Mammary epithelial cell (primary cell): ENCODE measurements at regions of chr2 and their contacts with region 1.

Region 1: DNA sequence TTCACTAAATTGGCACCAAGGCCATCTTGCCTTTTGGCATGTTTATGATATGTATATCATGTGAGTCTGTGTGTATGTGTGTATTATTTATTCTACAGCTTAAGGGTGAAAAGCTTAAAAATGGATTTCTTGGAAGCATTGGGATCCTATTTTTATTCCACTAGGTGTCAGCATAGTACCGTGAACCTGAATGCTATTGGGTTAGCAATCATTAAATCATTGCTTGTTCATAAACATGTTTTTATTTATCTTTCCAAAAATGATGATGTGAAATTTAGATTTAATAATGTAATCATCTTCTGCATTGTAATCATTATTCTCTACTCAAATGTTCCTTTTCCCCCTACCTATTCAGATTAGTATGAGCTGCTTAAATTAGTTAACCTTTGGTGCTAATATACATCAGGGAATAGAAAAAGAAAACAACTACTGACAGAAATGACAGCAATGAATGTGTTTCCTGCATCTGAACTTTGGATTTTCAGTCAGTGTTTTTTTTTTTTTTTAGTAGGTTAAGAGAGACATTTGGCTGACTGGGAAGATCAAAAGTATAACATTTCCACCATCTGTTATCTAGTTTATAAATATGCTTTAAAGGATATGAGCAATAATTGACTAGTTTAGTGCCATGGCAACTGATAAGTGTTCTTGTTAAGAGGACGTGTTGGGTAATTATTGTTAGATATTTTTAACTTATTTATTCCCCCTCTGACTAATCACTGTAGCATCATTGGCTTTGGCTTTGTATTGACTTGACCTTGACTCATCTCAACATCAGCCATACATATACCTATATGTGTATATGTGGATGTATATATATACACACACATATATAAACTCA is 14.1 kb upstream of the ZSWIM2 start:
- DNase-seq: peak; percentile 17
- H3K4me3 ChIP-seq: no peak overlapping the region
- H3K27ac ChIP-seq: no peak overlapping the region
- H3K4me1 ChIP-seq: no peaks in the 10 kb centered on the region
- H3K27me3 ChIP-seq: no peaks in the 10 kb centered on the region
- CTCF ChIP-seq: peak; percentile 64 to 70

Region 2: GRCh38 chr2:187075199-187075635 is 212.1 kb after region 1 on chr2:
- CTCF ChIA-PET with region 1: no interaction called
- dilution Hi-C with region 1: no loop called
- in situ Hi-C with region 1: no loop called
- intact Hi-C with region 1: no loop called
- DNase-seq: no peak
- H3K4me3 ChIP-seq: no peak overlapping the region
- H3K27ac ChIP-seq: no peak overlapping the region
- H3K4me1 ChIP-seq: no peaks in the 10 kb centered on the region
- H3K27me3 ChIP-seq: no peaks in the 10 kb centered on the region
- CTCF ChIP-seq: no peak

Region 3: DNA sequence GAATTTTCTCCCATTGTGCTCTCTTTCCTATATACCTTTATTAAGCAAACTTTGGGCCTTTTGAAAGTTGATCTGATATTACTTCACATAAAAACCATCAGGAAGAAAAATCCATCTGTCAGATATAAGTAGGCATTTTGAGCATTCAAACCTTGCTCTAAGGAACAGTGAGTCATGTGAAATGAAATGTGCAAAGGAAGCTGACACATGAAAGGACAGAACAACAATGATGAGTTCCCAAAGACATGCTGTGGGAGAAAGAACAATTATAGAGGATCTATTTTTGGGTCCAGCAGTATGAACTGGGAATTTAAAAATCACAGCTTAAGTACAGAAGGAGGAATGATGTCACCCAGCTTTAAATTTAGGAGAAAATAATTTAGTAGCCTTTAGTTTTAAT is 566.9 kb after region 1 on chr2:
- CTCF ChIA-PET with region 1: no interaction called
- dilution Hi-C with region 1: loop called (anchors 25 kb)
- in situ Hi-C with region 1: no loop called
- intact Hi-C with region 1: no loop called
- DNase-seq: peak; percentile 38
- H3K4me3 ChIP-seq: no peak overlapping the region
- H3K27ac ChIP-seq: no peak overlapping the region
- H3K4me1 ChIP-seq: peaks cover 11% of the 10 kb centered on the region
- H3K27me3 ChIP-seq: no peaks in the 10 kb centered on the region
- CTCF ChIP-seq: no peak

Region 4: DNA sequence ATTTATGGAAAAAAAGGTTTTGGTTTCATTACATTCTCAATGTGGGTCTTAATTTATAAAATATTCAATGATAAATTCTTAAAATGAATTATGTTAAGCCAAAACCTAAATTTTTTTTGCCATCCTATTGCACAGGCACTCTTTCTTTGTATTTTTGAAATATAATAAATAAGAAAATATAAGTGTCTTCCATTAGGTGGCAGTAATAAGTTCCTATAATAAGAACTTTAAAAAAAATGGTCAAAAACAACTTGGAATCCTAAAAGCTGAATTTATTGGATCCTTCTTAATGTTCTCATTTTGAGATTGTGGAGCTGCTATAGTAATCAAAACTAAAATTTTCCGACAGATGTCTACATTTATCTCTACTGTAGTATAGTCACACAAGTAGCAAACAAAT is 579.3 kb after region 1 on chr2:
- CTCF ChIA-PET with region 1: no interaction called
- dilution Hi-C with region 1: loop called (anchors 25 kb)
- in situ Hi-C with region 1: loop called in 1 of 2 experiments (anchors 5 kb)
- intact Hi-C with region 1: no loop called
- DNase-seq: no peak
- H3K4me3 ChIP-seq: no peak overlapping the region
- H3K27ac ChIP-seq: no peak overlapping the region
- H3K4me1 ChIP-seq: no peaks in the 10 kb centered on the region
- H3K27me3 ChIP-seq: no peaks in the 10 kb centered on the region
- CTCF ChIP-seq: peak in 1 of 2 donors; percentile 22